ENCODE measurements at regions of chr2 and their contacts with region 1.

Region 1: DNA sequence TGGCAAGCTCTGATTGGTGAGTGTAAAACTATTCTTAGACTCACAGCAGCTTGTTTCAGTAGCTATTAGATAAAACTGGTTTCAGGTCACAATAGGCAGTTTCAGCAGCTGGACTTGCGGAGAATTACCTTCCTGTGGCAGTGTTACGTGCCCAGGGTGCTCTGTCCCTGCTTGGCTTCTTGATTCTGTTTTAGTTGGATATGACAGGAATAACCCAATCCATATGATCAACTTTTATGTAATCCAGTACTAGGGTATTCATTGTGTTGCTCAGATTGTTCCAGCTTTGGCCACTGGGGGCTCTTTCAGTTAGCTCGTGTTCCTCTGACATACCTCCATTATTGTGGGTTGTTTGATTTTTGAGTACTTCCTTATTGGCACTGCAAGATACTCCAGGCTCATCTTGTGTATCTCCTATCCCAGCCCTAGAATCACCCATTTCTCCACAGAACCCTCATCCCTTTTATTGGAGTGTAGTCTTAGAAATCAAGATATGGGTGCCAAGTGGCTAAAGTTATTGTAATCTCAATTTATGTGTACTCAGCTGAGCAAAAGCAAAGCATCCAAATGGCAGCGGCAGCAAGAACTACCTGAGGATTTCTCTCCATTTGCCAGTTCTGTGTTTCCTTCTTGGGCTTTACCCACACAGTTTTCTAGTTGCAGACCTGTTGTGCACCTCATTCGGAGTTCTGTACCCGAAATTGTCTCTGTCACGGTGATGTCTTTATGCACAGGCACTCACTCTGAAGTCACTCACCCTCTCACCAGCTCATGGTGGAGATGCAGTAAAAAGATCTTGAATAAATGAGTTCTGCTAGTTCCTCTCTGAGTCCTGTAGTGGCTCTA is 43.4 kb downstream of the INPP4A start:
- DNase-seq: peak; percentile 59
- ATAC-seq: peak; percentile 86
- H3K4me3 ChIP-seq: no peak overlapping the region
- H3K4me3 Mint-ChIP-seq: no peak overlapping the region
- H3K27ac ChIP-seq: no peak overlapping the region
- H3K27ac Mint-ChIP-seq: no peak overlapping the region
- H3K4me1 ChIP-seq: peaks cover 2 to 21% of the 10 kb centered on the region in 2 donors
- H3K4me1 Mint-ChIP-seq: peaks cover 40% of the 10 kb centered on the region
- H3K27me3 ChIP-seq: no peaks in the 10 kb centered on the region
- H3K27me3 Mint-ChIP-seq: no peaks in the 10 kb centered on the region
- CTCF ChIP-seq: peak; percentile 78

Region 2: GRCh38 chr2:98465456-98466226 is 22.4 kb before region 1 on chr2:
- CTCF ChIA-PET with region 1: interaction called, 14 read pairs
- POLR2A ChIA-PET with region 1: no interaction called
- intact Hi-C with region 1: no loop called
- DNase-seq: peak; percentile 40
- ATAC-seq: no peak
- H3K4me3 ChIP-seq: peak overlapping the region in 1 of 5 experiments; percentile 12
- H3K4me3 Mint-ChIP-seq: peak overlapping the region; percentile 64
- H3K27ac ChIP-seq: peak overlapping the region; percentile 31 to 58
- H3K27ac Mint-ChIP-seq: peak overlapping the region; percentile 82
- H3K4me1 ChIP-seq: peaks cover 56 to 68% of the 10 kb centered on the region in 2 donors
- H3K4me1 Mint-ChIP-seq: peaks cover 63% of the 10 kb centered on the region
- H3K27me3 ChIP-seq: no peaks in the 10 kb centered on the region
- H3K27me3 Mint-ChIP-seq: no peaks in the 10 kb centered on the region
- CTCF ChIP-seq: no peak

Measured in B cell (primary cell).